CD4-positive, alpha-beta T cell (primary cell): ENCODE measurements at regions of chr6 and their contacts with region 1.

Region 1: DNA sequence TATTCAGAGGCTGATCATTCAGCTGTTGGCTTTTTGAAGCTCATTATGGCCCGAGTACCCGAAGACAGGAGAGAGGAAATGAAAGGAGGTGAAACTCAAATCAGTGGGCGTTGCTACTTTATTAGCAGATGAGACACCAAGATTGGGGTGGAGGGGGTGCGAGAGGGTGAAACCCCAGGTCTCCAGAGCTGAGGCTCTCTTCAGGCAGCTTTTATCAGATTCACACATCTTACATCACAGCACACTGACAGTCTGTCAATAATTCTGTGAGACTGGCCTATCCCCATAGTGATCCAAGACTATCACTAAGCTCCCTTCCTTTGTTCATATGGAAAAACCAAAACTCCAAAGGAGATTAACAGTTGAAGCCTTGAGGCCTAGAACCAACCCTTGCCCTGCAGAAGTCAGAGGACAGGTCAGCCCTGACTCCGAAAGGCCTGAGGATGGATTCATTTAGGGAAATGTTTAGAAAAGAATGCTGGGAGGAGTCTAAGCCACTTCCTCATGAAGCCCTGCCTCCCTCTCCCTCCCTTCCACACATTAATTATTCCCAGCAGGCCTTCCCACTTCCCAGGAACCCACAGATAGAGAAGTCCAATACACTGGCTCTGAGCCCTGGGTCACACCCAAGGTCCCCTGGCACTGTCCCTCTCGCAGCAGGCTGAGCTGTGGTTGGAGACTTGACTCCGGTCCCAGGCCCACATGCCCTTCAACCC is 23.2 kb downstream of the TRERF1 start:
- DNase-seq: peak in 8 of 14 experiments; percentile 16 to 78 (median 44)
- ATAC-seq: peak; percentile 73
- H3K4me3 ChIP-seq: no peak overlapping the region
- H3K4me3 Mint-ChIP-seq: peak overlapping the region; percentile 61
- H3K27ac ChIP-seq: peak overlapping the region; percentile 24 to 52
- H3K27ac Mint-ChIP-seq: peak overlapping the region; percentile 87
- H3K4me1 ChIP-seq: peaks cover 47% of the 10 kb centered on the region
- H3K4me1 Mint-ChIP-seq: peaks cover 70% of the 10 kb centered on the region
- H3K27me3 ChIP-seq: no peaks in the 10 kb centered on the region
- H3K27me3 Mint-ChIP-seq: no peaks in the 10 kb centered on the region
- CTCF ChIP-seq: no peak

Region 2: DNA sequence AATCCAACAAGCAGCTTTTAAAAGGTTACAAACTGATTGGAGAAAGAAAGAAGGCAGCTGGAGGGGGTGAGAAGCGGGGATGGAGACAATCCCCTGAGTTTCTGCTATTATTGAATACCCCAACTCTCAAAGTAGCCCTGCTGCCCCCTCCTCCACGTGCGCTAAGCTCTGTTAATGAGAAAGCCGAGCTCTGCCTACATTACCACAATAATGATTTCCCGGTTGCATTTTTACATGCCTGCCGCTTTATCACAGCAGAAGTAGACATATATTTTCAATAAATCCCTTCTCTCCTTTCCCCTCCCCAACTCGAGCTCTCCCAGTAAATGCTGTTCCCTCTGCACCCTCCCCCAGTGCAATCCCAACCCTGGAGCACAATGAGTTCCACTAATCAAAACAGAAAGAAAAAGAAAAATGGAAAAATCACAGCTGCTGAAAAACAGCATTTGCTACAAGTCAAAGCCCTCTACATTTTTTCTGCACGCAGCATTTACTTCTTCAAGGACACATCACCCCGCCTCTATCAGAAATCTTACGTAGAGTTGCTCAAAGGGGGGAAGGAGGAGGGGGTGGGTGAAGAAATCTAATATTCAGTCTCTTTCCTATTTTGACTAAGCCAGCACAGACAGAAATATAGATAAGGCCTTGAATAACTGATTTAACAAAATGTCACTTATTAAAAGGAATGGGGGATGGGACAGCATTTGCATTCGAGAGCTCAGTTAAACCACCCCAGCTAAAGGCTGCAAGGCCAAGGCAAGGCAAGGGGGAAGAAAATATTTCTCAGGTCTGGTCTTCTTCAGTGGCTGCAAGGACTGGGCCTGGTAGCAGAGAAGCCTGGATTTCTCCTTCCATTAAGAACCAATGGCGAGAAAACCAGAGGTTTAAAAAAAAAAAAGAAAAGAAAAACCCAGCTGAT is 12.6 kb after region 1 on chr6:
- CTCF ChIA-PET with region 1: interaction called, 3 read pairs
- POLR2A ChIA-PET with region 1: interaction called, 11 read pairs
- intact Hi-C with region 1: loop called in 1 of 2 experiments (anchors 2 kb)
- DNase-seq: peak in 3 of 14 experiments; percentile 30 to 44 (median 39)
- ATAC-seq: peak; percentile 48
- H3K4me3 ChIP-seq: peak overlapping the region; percentile 1
- H3K4me3 Mint-ChIP-seq: peak overlapping the region; percentile 71
- H3K27ac ChIP-seq: peak overlapping the region in 1 of 2 donors; percentile 4
- H3K27ac Mint-ChIP-seq: peak overlapping the region; percentile 84
- H3K4me1 ChIP-seq: peaks cover 58% of the 10 kb centered on the region
- H3K4me1 Mint-ChIP-seq: peaks cover 84% of the 10 kb centered on the region
- H3K27me3 ChIP-seq: no peaks in the 10 kb centered on the region
- H3K27me3 Mint-ChIP-seq: no peaks in the 10 kb centered on the region
- CTCF ChIP-seq: no peak

Region 3: GRCh38 chr6:42963855-42964605 is 535.5 kb after region 1 on chr6:
- CTCF ChIA-PET with region 1: no interaction called
- POLR2A ChIA-PET with region 1: no interaction called
- intact Hi-C with region 1: no loop called
- DNase-seq: peak in 8 of 14 experiments; percentile 16 to 65 (median 34)
- ATAC-seq: no peak
- H3K4me3 ChIP-seq: no peak overlapping the region
- H3K4me3 Mint-ChIP-seq: no peak overlapping the region
- H3K27ac ChIP-seq: no peak overlapping the region
- H3K27ac Mint-ChIP-seq: no peak overlapping the region
- H3K4me1 ChIP-seq: peaks cover 15% of the 10 kb centered on the region
- H3K4me1 Mint-ChIP-seq: peaks cover 20% of the 10 kb centered on the region
- H3K27me3 ChIP-seq: no peaks in the 10 kb centered on the region
- H3K27me3 Mint-ChIP-seq: no peaks in the 10 kb centered on the region
- CTCF ChIP-seq: no peak